ENCODE measurements at regions of chr18 and their contacts with region 1.

Region 1: GRCh38 chr18:75966431-75966830 is 528.6 kb downstream of the ZNF516 start:
- DNase-seq: no peak
- CTCF ChIP-seq: no peak

Region 2: GRCh38 chr18:75977081-75977480 is 10.7 kb after region 1 on chr18:
- CTCF ChIA-PET with region 1: interaction called, 14 read pairs
- POLR2A ChIA-PET with region 1: no interaction called
- DNase-seq: no peak
- CTCF ChIP-seq: no peak

Region 3: DNA sequence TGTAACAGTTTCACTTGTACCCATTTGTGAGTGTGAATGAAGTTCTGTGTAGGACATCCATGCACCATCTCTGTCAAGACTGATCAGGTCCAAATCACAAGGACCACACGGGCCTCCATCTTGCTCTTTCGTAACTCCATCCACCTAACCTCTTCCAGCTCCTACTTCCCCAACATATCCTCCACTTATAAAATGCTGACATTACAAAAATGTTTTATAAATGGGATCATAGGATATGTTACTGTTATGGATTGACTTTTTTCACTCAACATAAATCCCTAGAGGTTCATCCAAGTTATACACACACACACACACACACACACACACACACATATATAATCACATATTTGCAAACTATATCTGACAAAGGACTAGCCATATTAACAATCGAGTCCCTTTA is 51.8 kb after region 1 on chr18:
- CTCF ChIA-PET with region 1: no interaction called
- POLR2A ChIA-PET with region 1: no interaction called
- DNase-seq: no peak
- CTCF ChIP-seq: no peak